MCF 10A (cell line): ENCODE measurements at regions of chr3 and their contacts with region 1.

Region 1: DNA sequence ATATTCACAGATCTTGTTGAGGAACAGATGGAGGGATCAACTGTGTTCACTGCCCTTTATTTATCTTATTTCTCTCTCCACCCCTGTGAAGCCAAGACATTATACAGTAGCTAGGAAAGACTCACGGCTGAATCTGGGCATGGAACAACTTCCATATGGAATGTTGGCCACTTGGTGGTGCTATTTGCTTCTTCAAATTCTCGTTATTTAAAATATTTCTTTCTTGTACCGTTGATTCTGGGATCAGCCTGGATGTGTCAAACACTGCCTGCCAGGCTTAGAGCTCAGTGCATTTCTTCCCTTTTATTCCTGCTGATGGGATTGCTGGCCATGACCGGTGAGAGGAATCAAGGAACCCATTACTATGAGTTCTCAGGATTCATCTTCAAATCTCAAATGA is 17.5 kb upstream of the GASK1A start:
- DNase-seq: peak; percentile 64
- H3K4me3 Mint-ChIP-seq: no peak overlapping the region
- H3K27ac Mint-ChIP-seq: no peak overlapping the region
- H3K4me1 Mint-ChIP-seq: no peaks in the 10 kb centered on the region
- H3K27me3 Mint-ChIP-seq: peaks cover 67% of the 10 kb centered on the region
- CTCF ChIP-seq: peak; percentile 56

Region 2: DNA sequence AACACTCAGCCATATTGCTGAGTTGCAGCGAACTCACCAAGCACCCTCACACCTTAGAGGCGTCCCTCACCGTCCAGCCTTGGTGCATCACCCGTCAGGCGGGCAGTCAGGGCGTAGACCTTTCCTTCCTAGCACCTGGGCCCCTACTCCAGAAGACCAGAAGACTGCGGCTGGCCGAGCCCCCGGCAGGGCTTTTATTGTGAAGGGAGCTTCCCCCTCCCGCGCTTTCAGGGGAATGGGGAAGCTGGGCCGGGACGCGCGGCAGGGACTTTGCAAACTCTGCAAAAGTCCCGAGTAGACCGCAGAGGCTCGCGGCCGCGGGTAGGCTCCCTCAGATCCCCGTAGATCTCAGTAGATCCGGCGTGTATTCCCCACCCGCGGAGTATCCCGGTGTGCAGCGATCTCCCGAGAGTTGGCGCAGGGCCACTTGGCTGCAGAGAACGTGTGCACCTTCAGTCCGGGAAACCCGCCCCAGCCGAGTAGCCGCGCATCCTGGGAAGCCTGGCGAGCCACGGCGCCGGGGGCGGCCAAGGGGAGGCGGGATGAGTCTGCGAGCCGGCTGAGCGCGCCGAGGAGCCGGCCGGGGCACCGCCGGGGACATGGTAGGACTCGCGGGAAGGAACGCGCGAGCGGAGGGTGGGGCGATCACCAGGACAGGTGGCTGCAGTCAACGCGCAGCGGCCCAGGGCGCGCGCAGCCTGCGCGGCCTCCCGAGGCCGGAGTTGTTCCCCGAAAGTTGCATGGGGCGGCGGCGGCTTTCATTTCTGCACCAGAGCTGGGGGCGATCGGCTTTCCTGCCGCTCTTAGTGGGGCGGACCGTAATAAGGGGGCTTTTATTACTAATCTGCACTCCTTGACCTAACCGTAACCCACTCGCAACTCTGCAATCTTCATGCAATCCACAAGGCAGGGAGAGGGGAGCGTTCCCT is 17.7 kb after region 1 on chr3 and contains the start of gene GASK1A:
- CTCF ChIA-PET with region 1: interaction called, 25 read pairs
- POLR2A ChIA-PET with region 1: no interaction called
- intact Hi-C with region 1: no loop called
- DNase-seq: no peak
- H3K4me3 Mint-ChIP-seq: no peak within 1 kb of the TSS
- H3K27ac Mint-ChIP-seq: no peak within 1 kb of the TSS
- H3K4me1 Mint-ChIP-seq: no peaks in the 10 kb centered on the region
- H3K27me3 Mint-ChIP-seq: peaks cover 40% of the 10 kb centered on the region
- CTCF ChIP-seq: no peak
- total RNA-seq, gene GASK1A: not detected in 2 replicates

Region 3: GRCh38 chr3:43102773-43103480 is 141.3 kb after region 1 on chr3:
- CTCF ChIA-PET with region 1: interaction called, 13 read pairs
- POLR2A ChIA-PET with region 1: no interaction called
- intact Hi-C with region 1: no loop called
- DNase-seq: no peak
- H3K4me3 Mint-ChIP-seq: no peak overlapping the region
- H3K27ac Mint-ChIP-seq: peak overlapping the region; percentile 49
- H3K4me1 Mint-ChIP-seq: peaks cover 8% of the 10 kb centered on the region
- H3K27me3 Mint-ChIP-seq: no peaks in the 10 kb centered on the region
- CTCF ChIP-seq: no peak

Region 4: GRCh38 chr3:43138488-43139231 is 177.0 kb after region 1 on chr3:
- CTCF ChIA-PET with region 1: interaction called, 13 read pairs
- POLR2A ChIA-PET with region 1: interaction called, 3 read pairs
- intact Hi-C with region 1: no loop called
- DNase-seq: no peak
- H3K4me3 Mint-ChIP-seq: no peak overlapping the region
- H3K27ac Mint-ChIP-seq: no peak overlapping the region
- H3K4me1 Mint-ChIP-seq: no peaks in the 10 kb centered on the region
- H3K27me3 Mint-ChIP-seq: no peaks in the 10 kb centered on the region
- CTCF ChIP-seq: no peak

Region 5: DNA sequence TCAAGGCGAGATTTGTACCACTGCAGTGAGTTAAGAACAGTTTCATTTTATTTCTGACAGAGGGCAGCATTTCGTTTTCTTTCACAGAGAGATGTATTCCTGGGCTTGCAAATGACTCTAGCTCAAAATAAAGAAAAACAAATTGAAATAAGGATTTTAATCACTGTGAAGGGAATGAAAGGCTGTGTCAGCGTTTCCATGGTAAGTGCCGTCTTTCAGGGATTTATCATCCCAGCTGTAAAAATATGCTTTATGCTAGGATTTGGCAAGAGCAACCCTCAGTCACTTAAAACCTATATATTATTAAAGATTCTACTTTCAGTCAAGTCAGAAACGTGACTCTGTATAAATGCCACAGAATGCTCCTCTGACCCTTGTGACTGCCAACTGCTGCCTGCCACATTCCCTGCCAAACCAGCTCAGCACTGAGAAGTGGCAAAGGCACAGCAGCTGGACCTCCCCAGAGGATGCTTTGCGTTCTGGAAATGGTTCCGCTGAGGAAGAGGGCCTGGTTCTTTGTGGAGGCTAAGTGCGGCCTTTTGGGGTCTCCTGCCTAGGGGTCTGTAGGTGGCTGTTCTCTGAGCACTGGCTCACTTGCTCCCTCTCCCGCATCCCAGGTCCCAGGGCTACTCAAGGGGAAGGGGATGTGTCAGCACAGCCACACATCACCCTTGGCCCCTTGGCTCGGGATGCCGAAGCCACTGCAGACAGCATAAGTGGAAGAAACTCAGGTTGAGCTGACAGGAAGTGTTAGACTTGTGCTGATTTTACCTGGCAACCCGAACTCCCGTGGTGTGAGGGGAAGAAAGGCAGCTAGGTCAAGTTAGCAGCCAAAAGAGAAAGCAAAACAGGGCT is 200.8 kb after region 1 on chr3:
- CTCF ChIA-PET with region 1: interaction called, 262 read pairs
- POLR2A ChIA-PET with region 1: interaction called, 3 read pairs
- intact Hi-C with region 1: no loop called
- DNase-seq: peak; percentile 49
- H3K4me3 Mint-ChIP-seq: no peak overlapping the region
- H3K27ac Mint-ChIP-seq: no peak overlapping the region
- H3K4me1 Mint-ChIP-seq: no peaks in the 10 kb centered on the region
- H3K27me3 Mint-ChIP-seq: no peaks in the 10 kb centered on the region
- CTCF ChIP-seq: peak; percentile 24

Region 6: DNA sequence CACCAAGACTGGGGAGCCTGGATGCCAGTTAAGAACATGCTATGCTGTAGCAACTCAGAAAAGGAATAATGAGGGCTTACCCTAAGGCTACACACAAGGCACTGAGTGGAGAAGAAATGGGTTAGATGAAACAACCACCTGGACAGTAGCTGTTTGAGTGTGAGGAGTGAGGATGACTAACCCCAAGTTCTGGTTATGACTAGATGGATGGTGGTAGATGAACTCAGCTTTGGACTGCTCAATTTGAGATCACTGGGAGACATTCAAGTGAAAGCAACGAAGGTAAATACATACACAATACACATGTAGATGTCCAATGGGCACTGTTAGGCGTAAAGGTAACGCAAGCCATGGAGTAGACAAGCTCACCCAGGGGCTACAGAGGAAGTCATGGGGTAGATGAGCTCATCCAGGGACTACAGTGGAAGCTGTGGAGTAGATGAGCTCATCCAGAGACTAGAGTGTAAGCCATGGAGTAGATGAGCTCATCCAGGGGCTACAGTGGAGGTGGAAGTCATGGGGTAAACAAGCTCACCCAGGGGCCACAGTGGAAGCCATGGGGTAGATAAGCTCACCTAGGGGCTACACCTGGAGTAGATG is 561.9 kb after region 1 on chr3:
- CTCF ChIA-PET with region 1: interaction called, 10 read pairs
- POLR2A ChIA-PET with region 1: no interaction called
- intact Hi-C with region 1: no loop called
- DNase-seq: no peak
- H3K4me3 Mint-ChIP-seq: no peak overlapping the region
- H3K27ac Mint-ChIP-seq: no peak overlapping the region
- H3K4me1 Mint-ChIP-seq: no peaks in the 10 kb centered on the region
- H3K27me3 Mint-ChIP-seq: no peaks in the 10 kb centered on the region
- CTCF ChIP-seq: no peak